CD4-positive, alpha-beta T cell (primary cell): ENCODE measurements at regions of chr22 and their contacts with region 1.

Region 1: DNA sequence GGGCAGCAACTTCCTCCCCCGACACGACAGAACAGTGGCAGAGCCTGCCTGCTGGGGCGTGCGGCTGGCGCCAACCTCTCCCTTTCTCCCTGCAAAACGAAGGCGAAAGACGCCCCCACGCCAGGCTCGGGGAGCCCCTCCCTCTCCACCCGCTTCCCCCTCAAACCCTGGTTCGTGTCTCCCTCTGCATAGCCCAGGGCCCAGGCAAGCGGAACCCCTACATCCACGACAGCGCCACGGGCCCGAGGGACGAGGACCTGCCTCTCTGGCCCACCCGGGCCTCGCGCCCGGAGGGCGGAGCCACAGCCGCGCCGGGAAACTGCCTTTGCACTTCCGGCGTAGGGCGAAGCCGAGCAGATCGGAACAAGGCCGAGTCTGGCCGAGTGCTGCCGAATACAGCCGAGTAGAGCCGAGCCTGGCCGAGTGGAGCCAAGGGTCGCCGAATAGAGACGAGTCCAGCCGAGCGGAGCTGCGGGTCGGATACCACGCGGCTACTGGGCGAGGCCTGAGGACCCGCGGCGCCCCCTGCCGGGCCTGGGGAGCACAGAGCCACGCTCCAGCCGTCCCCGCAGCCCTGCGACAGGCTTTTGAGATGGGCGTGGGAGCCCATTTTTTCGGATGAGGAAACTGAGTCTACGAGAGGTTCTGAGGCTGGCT is 11.2 kb upstream of the C1QTNF6 start:
- DNase-seq: peak; percentile 97 to 100 (median 99)
- ATAC-seq: peak; percentile 95
- H3K4me3 ChIP-seq: peak overlapping the region; percentile 87
- H3K4me3 Mint-ChIP-seq: peak overlapping the region; percentile 93
- H3K27ac ChIP-seq: peak overlapping the region; percentile 90 to 94
- H3K27ac Mint-ChIP-seq: peak overlapping the region; percentile 100
- H3K4me1 ChIP-seq: peaks cover 57% of the 10 kb centered on the region
- H3K4me1 Mint-ChIP-seq: peaks cover 48% of the 10 kb centered on the region
- H3K27me3 ChIP-seq: no peaks in the 10 kb centered on the region
- H3K27me3 Mint-ChIP-seq: no peaks in the 10 kb centered on the region
- CTCF ChIP-seq: peak; percentile 90

Region 2: GRCh38 chr22:36781656-36782627 is 417.3 kb before region 1 on chr22:
- CTCF ChIA-PET with region 1: no interaction called
- POLR2A ChIA-PET with region 1: no interaction called
- intact Hi-C with region 1: loop called (anchors 5 to 10 kb)
- DNase-seq: peak; percentile 73 to 95 (median 87)
- ATAC-seq: peak; percentile 96
- H3K4me3 ChIP-seq: no peak overlapping the region
- H3K4me3 Mint-ChIP-seq: no peak overlapping the region
- H3K27ac ChIP-seq: no peak overlapping the region
- H3K27ac Mint-ChIP-seq: peak overlapping the region; percentile 33
- H3K4me1 ChIP-seq: peaks cover 16% of the 10 kb centered on the region
- H3K4me1 Mint-ChIP-seq: peaks cover 20% of the 10 kb centered on the region
- H3K27me3 ChIP-seq: no peaks in the 10 kb centered on the region
- H3K27me3 Mint-ChIP-seq: no peaks in the 10 kb centered on the region
- CTCF ChIP-seq: peak; percentile 97

Region 3: GRCh38 chr22:37060801-37061610 is 138.2 kb before region 1 on chr22:
- CTCF ChIA-PET with region 1: no interaction called
- POLR2A ChIA-PET with region 1: no interaction called
- intact Hi-C with region 1: no loop called
- DNase-seq: no peak
- ATAC-seq: no peak
- H3K4me3 ChIP-seq: no peak overlapping the region
- H3K4me3 Mint-ChIP-seq: no peak overlapping the region
- H3K27ac ChIP-seq: no peak overlapping the region
- H3K27ac Mint-ChIP-seq: no peak overlapping the region
- H3K4me1 ChIP-seq: peaks cover 21% of the 10 kb centered on the region
- H3K4me1 Mint-ChIP-seq: peaks cover 6% of the 10 kb centered on the region
- H3K27me3 ChIP-seq: no peaks in the 10 kb centered on the region
- H3K27me3 Mint-ChIP-seq: no peaks in the 10 kb centered on the region
- CTCF ChIP-seq: no peak

Region 4: DNA sequence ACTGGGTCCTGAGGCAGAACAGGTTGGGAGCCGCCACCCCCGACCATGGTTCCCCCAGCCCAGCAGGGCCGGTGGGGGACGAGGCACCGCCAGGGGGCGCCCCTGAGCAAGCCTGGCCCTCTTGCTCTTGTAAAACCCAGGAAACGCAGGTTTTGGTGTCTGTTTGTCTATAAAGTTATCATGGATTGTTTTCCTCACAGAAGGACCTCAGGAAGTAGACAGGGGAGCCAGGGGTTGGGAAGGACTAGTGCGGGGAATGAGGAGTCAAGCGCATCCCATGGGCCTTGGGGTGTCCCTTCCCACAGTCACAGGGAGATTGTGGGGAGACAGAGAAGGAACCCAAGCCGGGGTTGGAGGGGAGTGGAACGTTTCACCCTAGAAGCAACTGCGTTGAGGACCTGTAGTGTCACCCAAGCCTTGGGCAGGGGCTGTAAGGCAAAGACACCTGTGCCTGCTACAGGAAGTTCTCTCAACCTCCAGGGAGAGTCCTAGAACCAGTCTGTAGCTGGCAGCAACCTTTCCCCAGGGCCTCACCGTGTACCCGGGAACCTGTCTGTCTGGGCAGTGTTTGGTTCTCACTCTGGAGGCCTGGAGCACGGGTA is 121.2 kb before region 1 on chr22:
- CTCF ChIA-PET with region 1: interaction called, 18 read pairs
- POLR2A ChIA-PET with region 1: interaction called, 22 read pairs
- intact Hi-C with region 1: loop called (anchors 1 kb)
- DNase-seq: peak; percentile 69 to 92 (median 84)
- ATAC-seq: peak; percentile 14
- H3K4me3 ChIP-seq: no peak overlapping the region
- H3K4me3 Mint-ChIP-seq: peak overlapping the region; percentile 12
- H3K27ac ChIP-seq: peak overlapping the region in 1 of 2 donors; percentile 5
- H3K27ac Mint-ChIP-seq: peak overlapping the region; percentile 99
- H3K4me1 ChIP-seq: peaks cover 47% of the 10 kb centered on the region
- H3K4me1 Mint-ChIP-seq: peaks cover 34% of the 10 kb centered on the region
- H3K27me3 ChIP-seq: no peaks in the 10 kb centered on the region
- H3K27me3 Mint-ChIP-seq: no peaks in the 10 kb centered on the region
- CTCF ChIP-seq: peak; percentile 99

Region 5: DNA sequence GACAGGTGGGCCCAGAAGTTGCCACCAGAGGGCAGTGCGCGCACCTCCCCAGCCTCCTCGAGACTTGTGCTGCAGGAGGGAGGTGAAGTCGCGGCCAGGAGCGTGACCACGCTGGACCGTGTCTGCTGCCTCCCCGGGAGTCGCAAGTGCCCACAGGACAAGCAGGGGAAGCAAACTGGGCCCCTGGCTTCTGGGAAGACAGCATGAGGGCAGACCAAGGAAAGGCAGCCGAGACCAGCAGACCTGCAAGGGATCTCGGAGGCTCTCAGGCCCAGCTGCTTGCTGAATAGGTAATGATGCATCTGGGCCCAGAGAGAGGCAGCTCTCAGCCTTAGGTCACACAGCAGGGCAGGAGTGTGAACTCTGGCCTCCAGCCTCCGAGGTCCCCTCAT is 32.6 kb before region 1 on chr22:
- CTCF ChIA-PET with region 1: interaction called, 29 read pairs
- POLR2A ChIA-PET with region 1: interaction called, 17 read pairs
- intact Hi-C with region 1: loop called (anchors 1 kb)
- DNase-seq: peak; percentile 68 to 91 (median 82)
- ATAC-seq: peak; percentile 59
- H3K4me3 ChIP-seq: peak overlapping the region; percentile 53
- H3K4me3 Mint-ChIP-seq: peak overlapping the region; percentile 69
- H3K27ac ChIP-seq: no peak overlapping the region
- H3K27ac Mint-ChIP-seq: peak overlapping the region; percentile 51
- H3K4me1 ChIP-seq: peaks cover 91% of the 10 kb centered on the region
- H3K4me1 Mint-ChIP-seq: peaks cover 82% of the 10 kb centered on the region
- H3K27me3 ChIP-seq: no peaks in the 10 kb centered on the region
- H3K27me3 Mint-ChIP-seq: no peaks in the 10 kb centered on the region
- CTCF ChIP-seq: peak; percentile 88

Region 6: GRCh38 chr22:37229805-37230672 is 30.8 kb after region 1 on chr22:
- CTCF ChIA-PET with region 1: interaction called, 43 read pairs
- POLR2A ChIA-PET with region 1: interaction called, 57 read pairs
- intact Hi-C with region 1: loop called (anchors 2 kb)
- DNase-seq: peak; percentile 79 to 96 (median 88)
- ATAC-seq: peak; percentile 78
- H3K4me3 ChIP-seq: peak overlapping the region; percentile 35
- H3K4me3 Mint-ChIP-seq: peak overlapping the region; percentile 83
- H3K27ac ChIP-seq: peak overlapping the region; percentile 96 to 97
- H3K27ac Mint-ChIP-seq: peak overlapping the region; percentile 97
- H3K4me1 ChIP-seq: peaks cover 97% of the 10 kb centered on the region
- H3K4me1 Mint-ChIP-seq: peaks cover 90% of the 10 kb centered on the region
- H3K27me3 ChIP-seq: no peaks in the 10 kb centered on the region
- H3K27me3 Mint-ChIP-seq: no peaks in the 10 kb centered on the region
- CTCF ChIP-seq: no peak

Region 7: DNA sequence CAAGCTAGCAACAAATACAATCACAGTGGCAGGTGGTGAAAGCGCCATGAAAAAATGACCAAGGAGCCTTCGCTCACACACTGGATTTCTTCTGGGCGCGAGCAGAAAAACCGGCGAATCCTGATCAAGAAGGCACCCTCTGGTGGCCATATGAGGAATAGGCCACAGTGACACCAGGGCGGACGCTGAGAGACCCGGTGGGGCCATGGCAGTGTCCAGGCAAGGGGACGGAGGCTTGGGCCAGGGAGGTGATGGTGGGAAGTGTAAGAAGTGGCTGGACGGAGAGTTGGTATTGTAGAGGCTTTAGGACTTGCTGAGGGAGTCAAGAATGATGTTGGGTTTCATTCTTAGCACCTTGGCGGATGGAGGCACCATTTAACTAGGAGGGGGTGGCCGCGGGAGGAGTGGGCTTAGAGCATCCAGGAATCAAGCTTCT is 61.7 kb after region 1 on chr22:
- CTCF ChIA-PET with region 1: interaction called, 21 read pairs
- POLR2A ChIA-PET with region 1: interaction called, 8 read pairs
- intact Hi-C with region 1: loop called in 1 of 2 experiments (anchors 1 kb)
- DNase-seq: peak in 13 of 14 experiments; percentile 49 to 81 (median 59)
- ATAC-seq: peak; percentile 80
- H3K4me3 ChIP-seq: no peak overlapping the region
- H3K4me3 Mint-ChIP-seq: no peak overlapping the region
- H3K27ac ChIP-seq: no peak overlapping the region
- H3K27ac Mint-ChIP-seq: peak overlapping the region; percentile 12
- H3K4me1 ChIP-seq: peaks cover 25% of the 10 kb centered on the region
- H3K4me1 Mint-ChIP-seq: peaks cover 24% of the 10 kb centered on the region
- H3K27me3 ChIP-seq: no peaks in the 10 kb centered on the region
- H3K27me3 Mint-ChIP-seq: no peaks in the 10 kb centered on the region
- CTCF ChIP-seq: peak; percentile 85

Region 8: GRCh38 chr22:37781479-37781911 is 582.3 kb after region 1 on chr22:
- CTCF ChIA-PET with region 1: no interaction called
- POLR2A ChIA-PET with region 1: no interaction called
- intact Hi-C with region 1: no loop called
- DNase-seq: peak in 1 of 14 experiments; percentile 11
- ATAC-seq: no peak
- H3K4me3 ChIP-seq: no peak overlapping the region
- H3K4me3 Mint-ChIP-seq: no peak overlapping the region
- H3K27ac ChIP-seq: no peak overlapping the region
- H3K27ac Mint-ChIP-seq: no peak overlapping the region
- H3K4me1 ChIP-seq: no peaks in the 10 kb centered on the region
- H3K4me1 Mint-ChIP-seq: no peaks in the 10 kb centered on the region
- H3K27me3 ChIP-seq: no peaks in the 10 kb centered on the region
- H3K27me3 Mint-ChIP-seq: peaks cover 4% of the 10 kb centered on the region
- CTCF ChIP-seq: no peak